ENCODE measurements at regions of chr17 and their contacts with region 1.

Region 1: GRCh38 chr17:64063766-64064224 is 43.4 kb upstream of the ICAM2 start:
- DNase-seq: peak; percentile 76
- H3K4me3 Mint-ChIP-seq: no peak overlapping the region
- H3K27ac Mint-ChIP-seq: peak overlapping the region; percentile 29
- H3K4me1 Mint-ChIP-seq: peaks cover 79% of the 10 kb centered on the region
- H3K27me3 Mint-ChIP-seq: no peaks in the 10 kb centered on the region

Region 2: GRCh38 chr17:64051153-64051552 is 12.6 kb before region 1 on chr17:
- CTCF ChIA-PET with region 1: interaction called, 10 read pairs
- DNase-seq: peak; percentile 36
- H3K4me3 Mint-ChIP-seq: no peak overlapping the region
- H3K27ac Mint-ChIP-seq: peak overlapping the region; percentile 97
- H3K4me1 Mint-ChIP-seq: peaks cover 56% of the 10 kb centered on the region
- H3K27me3 Mint-ChIP-seq: no peaks in the 10 kb centered on the region

Region 3: DNA sequence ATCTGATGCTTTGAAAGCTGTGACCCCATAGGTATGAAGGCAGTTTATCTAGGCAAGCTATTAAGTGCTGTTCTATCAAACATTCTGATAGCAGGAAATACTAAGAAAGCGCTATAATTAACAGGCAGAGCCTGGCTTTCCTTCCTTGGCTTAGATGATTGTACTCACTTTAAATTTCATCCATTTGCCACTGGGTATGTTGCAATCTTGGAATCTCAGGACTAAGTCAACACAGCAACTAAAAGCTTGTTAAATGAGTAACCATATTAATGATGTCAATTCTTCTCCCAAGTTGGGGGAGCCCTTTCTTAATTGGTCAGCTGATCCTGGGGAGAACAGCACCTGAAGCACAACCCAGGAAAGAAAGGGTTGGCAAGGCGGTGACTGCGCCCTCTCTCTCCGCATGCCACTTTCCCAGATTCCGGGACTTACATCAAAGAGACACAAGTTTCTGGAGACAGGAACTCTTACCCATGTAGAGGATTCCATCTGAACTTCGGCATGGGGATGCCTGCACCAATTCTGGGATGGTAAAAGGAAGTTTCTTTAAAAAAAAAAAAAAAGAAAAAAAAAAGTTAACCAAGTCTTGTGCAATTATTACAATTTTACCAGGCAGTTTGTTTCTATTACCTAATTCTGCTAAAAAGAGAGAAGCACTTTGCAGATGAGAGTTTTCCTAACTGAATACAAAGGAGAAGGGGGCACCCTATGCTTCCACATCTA is 11.1 kb after region 1 on chr17:
- CTCF ChIA-PET with region 1: interaction called, 11 read pairs
- DNase-seq: no peak
- H3K4me3 Mint-ChIP-seq: no peak overlapping the region
- H3K27ac Mint-ChIP-seq: no peak overlapping the region
- H3K4me1 Mint-ChIP-seq: peaks cover 33% of the 10 kb centered on the region
- H3K27me3 Mint-ChIP-seq: no peaks in the 10 kb centered on the region

Region 4: GRCh38 chr17:64120127-64120810 is 56.5 kb after region 1 on chr17:
- CTCF ChIA-PET with region 1: interaction called, 18 read pairs
- DNase-seq: no peak
- H3K4me3 Mint-ChIP-seq: peak overlapping the region; percentile 67
- H3K27ac Mint-ChIP-seq: peak overlapping the region; percentile 94
- H3K4me1 Mint-ChIP-seq: peaks cover 76% of the 10 kb centered on the region
- H3K27me3 Mint-ChIP-seq: no peaks in the 10 kb centered on the region

Region 5: GRCh38 chr17:64174686-64175456 is 111.1 kb after region 1 on chr17:
- CTCF ChIA-PET with region 1: no interaction called
- DNase-seq: no peak
- H3K4me3 Mint-ChIP-seq: no peak overlapping the region
- H3K27ac Mint-ChIP-seq: peak overlapping the region; percentile 43
- H3K4me1 Mint-ChIP-seq: no peaks in the 10 kb centered on the region
- H3K27me3 Mint-ChIP-seq: no peaks in the 10 kb centered on the region

Region 6: GRCh38 chr17:64200080-64201032 is 136.6 kb after region 1 on chr17:
- CTCF ChIA-PET with region 1: no interaction called
- DNase-seq: no peak
- H3K4me3 Mint-ChIP-seq: no peak overlapping the region
- H3K27ac Mint-ChIP-seq: no peak overlapping the region
- H3K4me1 Mint-ChIP-seq: peaks cover 9% of the 10 kb centered on the region
- H3K27me3 Mint-ChIP-seq: no peaks in the 10 kb centered on the region

Region 7: DNA sequence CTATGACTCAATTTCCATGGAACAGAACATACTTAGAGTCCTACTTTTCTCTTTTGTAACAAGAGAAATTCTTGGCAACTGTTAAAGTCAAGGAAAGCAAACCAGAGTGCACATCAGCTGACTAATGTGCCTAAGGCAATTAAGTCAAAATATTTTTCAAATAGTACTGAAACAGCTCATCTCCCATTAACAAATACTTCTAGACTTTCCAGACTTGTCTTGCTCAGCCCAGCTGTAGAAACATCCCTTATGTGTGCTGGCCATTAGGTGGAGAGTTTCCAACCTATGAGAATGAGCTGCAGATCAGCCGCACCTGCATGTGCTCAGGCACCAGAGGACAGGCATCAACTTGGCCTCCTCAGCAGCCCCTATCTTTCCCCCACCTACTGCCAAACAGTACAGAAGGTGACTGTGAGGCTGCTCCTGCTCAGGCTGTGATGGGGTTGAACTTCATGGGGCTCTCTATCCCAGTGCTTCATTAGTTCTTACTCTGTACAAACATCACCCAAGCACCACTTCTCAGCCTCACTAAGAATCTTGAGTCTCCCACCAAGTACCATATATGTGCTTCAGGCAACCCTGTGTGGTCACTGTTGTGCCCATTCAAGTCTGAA is 167.1 kb after region 1 on chr17:
- CTCF ChIA-PET with region 1: no interaction called
- DNase-seq: no peak
- H3K4me3 Mint-ChIP-seq: no peak overlapping the region
- H3K27ac Mint-ChIP-seq: no peak overlapping the region
- H3K4me1 Mint-ChIP-seq: no peaks in the 10 kb centered on the region
- H3K27me3 Mint-ChIP-seq: no peaks in the 10 kb centered on the region

Measured in activated naive CD4-positive, alpha-beta T cell treated with anti-CD3 and anti-CD28 coated beads, Interleukin-2, amount 10 ng/mL, durations not matched to agents 7 days and 5 days (primary cell).